AG04449 (cell line): ENCODE measurements at regions of chr16 and their contacts with region 1.

Region 1: DNA sequence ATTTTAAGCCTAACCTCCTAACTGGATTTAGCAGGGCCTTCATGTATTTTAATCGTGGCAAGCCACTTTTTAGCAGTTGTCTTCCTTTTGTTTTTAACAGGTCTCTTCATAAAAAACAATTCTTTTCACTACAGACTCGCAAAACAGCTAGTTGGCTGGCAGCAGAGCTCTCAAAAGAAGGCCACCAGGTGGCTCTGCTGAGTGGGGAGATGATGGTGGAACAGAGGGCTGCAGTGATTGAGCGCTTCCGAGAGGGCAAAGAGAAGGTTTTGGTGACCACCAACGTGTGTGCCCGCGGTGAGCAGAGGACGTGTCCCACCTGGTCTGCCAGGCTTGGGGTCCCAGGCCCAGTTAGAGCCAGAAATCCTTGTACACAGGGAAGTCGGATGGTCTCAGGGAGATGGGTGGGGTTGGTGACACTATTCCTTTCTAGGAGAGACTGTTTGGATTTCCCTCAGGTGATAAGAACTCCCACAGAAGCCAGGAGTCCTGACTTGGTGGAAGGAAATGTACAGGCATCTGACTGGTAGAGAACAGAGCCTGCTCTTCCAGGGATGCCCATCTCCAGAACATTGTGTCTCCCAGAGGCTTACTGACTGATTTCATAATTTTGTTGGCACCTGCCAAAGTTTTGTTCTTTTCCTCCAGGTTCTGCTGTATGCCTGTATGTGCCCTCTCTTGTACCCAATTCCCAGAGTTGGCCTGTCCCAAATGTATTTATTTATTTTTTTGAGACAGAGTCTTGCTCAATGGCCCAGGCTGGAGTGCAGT is 14.9 kb upstream of the DDX19A start:
- DNase-seq: no peak
- H3K4me3 ChIP-seq: no peak overlapping the region
- CTCF ChIP-seq: peak; percentile 44

Region 2: GRCh38 chr16:70345840-70346239 is 14.1 kb after region 1 on chr16:
- CTCF ChIA-PET with region 1: interaction called, 10 read pairs
- POLR2A ChIA-PET with region 1: no interaction called
- DNase-seq: no peak
- H3K4me3 ChIP-seq: peak overlapping the region; percentile 97
- CTCF ChIP-seq: no peak